Activated naive CD4-positive, alpha-beta T cell treated with anti-CD3 and anti-CD28 coated beads for 36 hours (primary cell): ENCODE measurements at regions of chr20 and their contacts with region 1.

Region 1: DNA sequence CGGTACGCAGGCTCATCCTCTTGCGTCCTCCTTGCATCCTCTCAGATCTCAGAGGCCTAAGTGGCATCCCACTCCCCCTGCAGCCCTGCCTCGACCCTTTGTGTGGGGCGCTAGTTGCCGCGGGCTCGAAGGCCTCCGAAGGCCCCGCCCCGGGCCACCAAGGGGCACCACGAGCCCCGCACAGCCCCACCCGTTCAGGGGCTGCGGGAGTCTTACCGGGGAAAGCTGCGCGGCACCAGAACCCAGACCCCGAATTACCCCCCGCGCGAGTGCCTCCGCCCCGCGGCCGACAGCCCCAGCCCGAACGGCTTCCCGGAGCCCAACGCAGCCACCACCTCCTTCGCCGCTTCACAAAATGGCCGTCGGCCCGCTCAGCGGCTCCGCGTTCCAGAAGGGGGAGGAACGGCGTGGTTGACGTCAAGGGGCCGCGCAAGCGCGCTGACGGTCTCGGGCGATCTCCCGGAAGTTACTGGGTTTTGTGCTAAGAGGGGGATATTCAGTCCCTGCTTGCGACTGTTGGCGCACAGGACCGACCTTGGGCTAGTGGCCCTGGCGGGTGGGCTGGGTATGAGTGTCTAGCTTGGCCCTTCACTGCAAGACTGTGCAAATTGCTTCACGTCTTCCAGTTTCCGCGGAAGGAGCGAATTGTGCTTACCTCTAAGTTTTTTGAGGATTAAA is at the starts of genes CPNE1 and RBM12:
- DNase-seq: peak; percentile 95
- H3K4me3 Mint-ChIP-seq: peak within 1 kb of the TSS; percentile 95
- H3K27ac Mint-ChIP-seq: peak within 1 kb of the TSS; percentile 99
- H3K4me1 Mint-ChIP-seq: peaks cover 36% of the 10 kb centered on the region
- H3K27me3 Mint-ChIP-seq: no peaks in the 10 kb centered on the region
- total RNA-seq, gene CPNE1: 261 to 281 TPM
- total RNA-seq, gene RBM12: 106 to 110 TPM

Region 2: DNA sequence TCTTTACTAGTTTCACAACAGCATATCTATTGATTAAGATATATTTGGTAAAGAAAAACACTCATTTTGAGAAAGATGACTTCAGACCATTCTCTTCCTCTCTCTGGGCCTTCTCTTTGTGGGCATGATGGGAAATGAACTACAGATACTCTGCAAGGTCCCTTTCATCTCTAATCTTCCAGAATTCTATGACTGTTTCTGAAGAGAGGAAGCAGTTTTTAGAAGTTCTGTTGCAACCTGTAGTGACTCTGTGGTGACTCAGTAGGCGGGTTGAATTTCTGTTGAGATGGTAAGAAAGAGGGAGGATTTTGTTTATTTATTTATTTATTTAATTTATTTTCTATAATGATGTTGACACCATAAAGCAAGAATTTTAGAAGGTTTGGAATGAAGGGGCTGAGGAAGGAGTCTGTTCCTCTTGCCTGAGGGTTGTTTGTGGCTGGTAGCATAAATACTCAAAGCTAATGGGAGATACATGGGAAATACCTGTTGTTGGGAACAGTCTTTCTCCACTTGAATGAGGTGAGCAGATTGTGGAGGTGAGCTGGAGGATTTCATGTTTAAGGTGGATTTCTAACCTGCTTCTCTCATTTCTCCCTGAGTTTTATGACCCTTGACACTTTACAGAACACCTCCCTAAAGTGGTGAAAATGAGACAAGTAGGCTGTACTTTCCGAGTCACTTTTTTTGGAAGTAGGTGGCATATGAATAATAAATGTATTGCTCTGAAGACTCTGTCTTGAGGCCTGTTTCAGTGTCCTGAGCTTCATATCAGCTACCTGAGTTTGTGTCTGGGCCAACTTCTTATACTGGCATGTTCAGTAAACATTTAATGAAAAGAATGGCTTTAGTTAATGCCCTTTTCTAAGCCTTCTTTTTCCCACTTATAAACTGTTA is 773.3 kb before region 1 on chr20:
- CTCF ChIA-PET with region 1: no interaction called
- intact Hi-C with region 1: loop called (anchors 5 kb)
- DNase-seq: peak; percentile 71
- H3K4me3 Mint-ChIP-seq: peak overlapping the region; percentile 16
- H3K27ac Mint-ChIP-seq: peak overlapping the region; percentile 87
- H3K4me1 Mint-ChIP-seq: peaks cover 48% of the 10 kb centered on the region
- H3K27me3 Mint-ChIP-seq: no peaks in the 10 kb centered on the region

Region 3: DNA sequence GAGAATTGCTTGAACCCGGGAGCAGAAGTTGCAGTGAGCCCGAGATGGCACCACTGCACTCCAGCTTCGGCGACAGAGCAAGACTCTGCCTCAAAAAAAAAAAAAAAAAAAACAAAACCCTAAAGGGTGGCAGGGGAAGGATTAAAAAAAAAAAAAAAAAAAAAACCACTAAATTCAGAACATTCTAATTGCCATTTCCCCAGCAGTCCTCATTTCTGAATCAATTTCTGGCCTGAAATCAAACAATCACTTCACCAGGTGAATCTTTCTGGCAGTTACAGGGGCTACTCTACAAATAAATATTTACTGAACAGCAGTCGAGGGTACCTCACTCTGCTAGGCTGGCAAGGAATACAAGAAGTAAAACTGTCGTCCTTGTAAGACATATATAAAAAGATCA is 254.1 kb before region 1 on chr20:
- CTCF ChIA-PET with region 1: no interaction called
- intact Hi-C with region 1: loop called (anchors 5 kb)
- DNase-seq: no peak
- H3K4me3 Mint-ChIP-seq: peak overlapping the region; percentile 94
- H3K27ac Mint-ChIP-seq: peak overlapping the region; percentile 98
- H3K4me1 Mint-ChIP-seq: peaks cover 22% of the 10 kb centered on the region
- H3K27me3 Mint-ChIP-seq: no peaks in the 10 kb centered on the region

Region 4: GRCh38 chr20:35583636-35584560 is 80.8 kb before region 1 on chr20:
- CTCF ChIA-PET with region 1: no interaction called
- intact Hi-C with region 1: no loop called
- DNase-seq: no peak
- H3K4me3 Mint-ChIP-seq: no peak overlapping the region
- H3K27ac Mint-ChIP-seq: no peak overlapping the region
- H3K4me1 Mint-ChIP-seq: no peaks in the 10 kb centered on the region
- H3K27me3 Mint-ChIP-seq: no peaks in the 10 kb centered on the region

Region 5: DNA sequence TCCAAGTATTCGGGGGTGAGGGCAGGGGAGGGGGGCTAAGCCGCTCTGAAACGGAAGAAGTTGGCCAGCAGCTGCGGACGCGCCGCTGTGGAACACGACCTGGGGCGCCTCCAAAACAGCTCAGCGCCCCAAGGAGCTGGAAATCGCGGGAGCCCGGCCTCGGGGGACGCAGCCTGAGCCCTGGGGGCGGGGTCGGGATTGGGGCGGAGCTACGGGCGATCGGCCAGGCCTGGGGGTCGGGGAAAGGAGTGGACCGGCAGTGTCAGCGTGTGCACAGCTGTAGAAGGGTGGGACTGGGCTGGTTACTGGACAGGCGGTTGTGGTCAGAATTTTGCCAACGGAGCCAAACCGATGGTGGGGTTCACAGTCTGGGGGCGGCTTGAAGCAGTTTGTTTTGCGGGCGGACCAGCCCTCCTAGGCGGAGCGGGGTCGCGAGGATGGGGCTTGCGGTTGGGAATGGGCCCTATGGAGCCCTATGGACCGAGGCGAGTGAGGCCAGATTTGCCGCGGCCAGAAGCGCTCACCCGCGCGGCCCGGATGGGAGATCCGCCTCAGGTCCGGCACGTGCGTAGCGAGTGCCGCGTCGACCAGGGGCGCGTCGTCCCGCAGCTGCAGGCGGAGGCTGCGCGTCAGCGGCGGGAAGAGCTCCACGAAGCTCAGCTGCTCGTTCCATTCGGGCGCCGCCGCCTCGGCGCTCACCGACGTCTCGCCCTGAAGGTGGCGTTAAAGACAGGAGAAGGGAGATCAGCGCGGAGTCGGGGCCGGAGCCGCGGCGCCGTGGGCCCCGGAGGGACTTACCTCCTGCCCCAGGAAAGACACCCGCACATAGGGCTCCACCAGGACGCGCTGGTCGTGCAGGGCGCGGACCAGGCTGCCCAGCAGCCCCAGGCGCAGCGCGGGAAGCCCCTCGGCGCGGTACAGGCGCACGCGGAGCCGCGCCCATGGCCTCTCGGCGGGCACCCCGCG is 63.4 kb before region 1 on chr20:
- CTCF ChIA-PET with region 1: interaction called, 3 read pairs
- intact Hi-C with region 1: loop called (anchors 1 kb)
- DNase-seq: peak; percentile 91
- H3K4me3 Mint-ChIP-seq: peak overlapping the region; percentile 64
- H3K27ac Mint-ChIP-seq: no peak overlapping the region
- H3K4me1 Mint-ChIP-seq: peaks cover 7% of the 10 kb centered on the region
- H3K27me3 Mint-ChIP-seq: peaks cover 13% of the 10 kb centered on the region

Region 6: DNA sequence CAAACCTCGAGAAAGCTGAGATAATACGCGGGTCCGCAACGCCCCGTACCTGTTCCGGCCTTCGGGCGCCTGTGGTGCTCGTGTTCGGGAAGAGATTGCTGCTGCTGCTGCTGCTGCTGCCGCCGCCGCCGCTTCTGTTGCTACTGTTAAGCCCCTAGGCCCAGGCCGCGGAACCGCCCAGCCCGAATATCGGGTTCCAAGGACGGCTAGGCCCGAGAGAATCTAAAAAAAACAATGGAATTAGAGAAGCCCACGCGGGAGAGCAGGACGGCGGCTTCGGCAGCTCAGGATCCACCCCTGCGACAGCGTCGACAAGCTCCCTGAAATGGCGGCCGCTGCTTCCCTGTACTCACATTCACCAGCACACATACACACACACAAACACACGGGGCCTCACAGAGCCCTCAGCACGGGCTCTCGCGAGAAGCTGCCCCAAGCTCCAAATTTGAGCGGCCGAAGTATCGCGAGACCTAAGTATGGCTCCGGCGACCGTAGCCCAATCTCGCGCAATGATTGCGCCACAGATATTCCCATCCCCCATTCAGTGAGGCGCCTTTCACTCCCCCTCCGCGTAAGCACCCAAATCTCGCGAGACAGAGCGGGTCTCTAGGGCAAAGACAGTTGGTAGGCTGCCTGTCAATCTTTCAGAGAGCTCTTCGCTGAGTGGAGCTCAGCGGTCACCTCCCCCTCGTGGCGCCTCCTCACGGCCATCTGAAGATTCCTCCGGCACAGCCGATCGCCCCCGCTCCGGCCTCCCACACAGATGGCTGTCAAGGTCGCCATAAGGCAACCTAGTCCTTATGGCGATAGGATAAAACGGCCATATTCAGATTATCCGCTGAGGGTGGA is 77.4 kb after region 1 on chr20 and contains the start of gene RBM39:
- CTCF ChIA-PET with region 1: interaction called, 4 read pairs
- intact Hi-C with region 1: loop called (anchors 1 kb)
- DNase-seq: peak; percentile 100
- H3K4me3 Mint-ChIP-seq: peak within 1 kb of the TSS; percentile 99
- H3K27ac Mint-ChIP-seq: peak within 1 kb of the TSS; percentile 100
- H3K4me1 Mint-ChIP-seq: peaks cover 38% of the 10 kb centered on the region
- H3K27me3 Mint-ChIP-seq: no peaks in the 10 kb centered on the region
- total RNA-seq, gene RBM39: 297 to 304 TPM